Activated T-helper 1 cell treated with anti-CD3 and anti-CD28 coated beads, Interleukin-12 subunit alpha, Interleukin-12 subunit beta, Interleukin-2, Interleukin-4 antibody, amounts not matched to agents 30 ng/mL and 10 ng/mL and 1 ng/mL, durations not matched to agents 14 hours and 24 hours and 36 hours (primary cell): ENCODE measurements at regions of chr11 and their contacts with region 1.

Region 1: GRCh38 chr11:93225662-93226061 is 27.9 kb upstream of the SLC36A4 start:
- DNase-seq: no peak
- H3K4me3 Mint-ChIP-seq: no peak overlapping the region
- H3K27ac Mint-ChIP-seq: no peak overlapping the region
- H3K4me1 Mint-ChIP-seq: no peaks in the 10 kb centered on the region
- H3K27me3 Mint-ChIP-seq: peaks cover 2% of the 10 kb centered on the region

Region 2: DNA sequence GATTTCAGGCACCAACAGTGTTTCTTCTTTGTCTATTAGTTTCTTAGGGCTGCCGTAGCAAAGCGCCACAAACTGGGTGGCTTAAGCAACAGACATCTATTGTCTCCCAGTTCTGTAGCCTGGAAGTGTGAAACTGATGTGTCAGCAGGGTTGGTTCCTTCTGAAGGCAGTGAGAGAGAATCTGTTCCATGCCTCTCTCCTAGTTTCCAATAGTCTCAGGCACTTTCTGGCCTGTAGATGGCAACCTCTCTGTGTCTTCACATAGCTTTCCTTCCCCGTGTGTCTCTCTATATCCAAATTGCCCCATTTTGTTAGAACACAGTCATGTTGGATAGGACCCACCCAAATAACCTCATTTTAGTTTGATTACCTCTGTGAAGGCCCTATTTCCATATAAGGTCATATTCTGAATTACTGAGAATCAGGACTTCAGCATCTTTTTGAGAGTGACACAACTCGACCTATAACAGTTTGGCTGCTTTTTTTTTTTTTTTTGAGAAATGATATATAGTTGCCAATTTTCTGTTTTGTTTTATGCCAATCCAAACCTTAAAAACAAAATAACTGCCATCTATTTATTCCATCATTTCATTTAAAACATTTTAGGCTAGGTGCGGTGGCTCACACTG is 136.1 kb before region 1 on chr11:
- intact Hi-C with region 1: loop called (anchors 1 kb)
- DNase-seq: no peak
- H3K4me3 Mint-ChIP-seq: no peak overlapping the region
- H3K27ac Mint-ChIP-seq: no peak overlapping the region
- H3K4me1 Mint-ChIP-seq: no peaks in the 10 kb centered on the region
- H3K27me3 Mint-ChIP-seq: peaks cover 20% of the 10 kb centered on the region

Region 3: DNA sequence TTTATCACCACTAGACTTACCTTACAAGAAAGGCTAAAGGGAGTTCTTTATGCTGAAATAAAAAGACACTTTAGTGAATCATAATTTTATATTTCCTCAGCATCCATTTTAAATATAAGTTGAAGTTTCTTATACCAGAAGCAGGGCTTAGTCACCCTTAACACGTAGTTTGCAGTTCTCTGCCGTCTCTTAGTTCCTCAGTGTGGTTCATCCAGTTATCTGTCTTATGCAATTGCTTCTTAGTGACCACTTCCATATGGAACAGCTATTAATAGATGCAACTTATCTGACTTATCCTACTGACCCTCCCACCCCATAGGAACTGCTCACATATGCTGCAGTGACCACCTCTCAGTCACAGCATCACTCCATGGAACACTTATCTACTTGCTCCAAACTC is 16.2 kb before region 1 on chr11:
- intact Hi-C with region 1: no loop called
- DNase-seq: no peak
- H3K4me3 Mint-ChIP-seq: no peak overlapping the region
- H3K27ac Mint-ChIP-seq: no peak overlapping the region
- H3K4me1 Mint-ChIP-seq: no peaks in the 10 kb centered on the region
- H3K27me3 Mint-ChIP-seq: peaks cover 5% of the 10 kb centered on the region